Activated CD8-positive, alpha-beta T cell treated with anti-CD3 and anti-CD28 coated beads, Interleukin-2, amount 10 ng/mL, durations not matched to agents 7 days and 5 days (primary cell): ENCODE measurements at regions of chr2 and their contacts with region 1.

Region 1: DNA sequence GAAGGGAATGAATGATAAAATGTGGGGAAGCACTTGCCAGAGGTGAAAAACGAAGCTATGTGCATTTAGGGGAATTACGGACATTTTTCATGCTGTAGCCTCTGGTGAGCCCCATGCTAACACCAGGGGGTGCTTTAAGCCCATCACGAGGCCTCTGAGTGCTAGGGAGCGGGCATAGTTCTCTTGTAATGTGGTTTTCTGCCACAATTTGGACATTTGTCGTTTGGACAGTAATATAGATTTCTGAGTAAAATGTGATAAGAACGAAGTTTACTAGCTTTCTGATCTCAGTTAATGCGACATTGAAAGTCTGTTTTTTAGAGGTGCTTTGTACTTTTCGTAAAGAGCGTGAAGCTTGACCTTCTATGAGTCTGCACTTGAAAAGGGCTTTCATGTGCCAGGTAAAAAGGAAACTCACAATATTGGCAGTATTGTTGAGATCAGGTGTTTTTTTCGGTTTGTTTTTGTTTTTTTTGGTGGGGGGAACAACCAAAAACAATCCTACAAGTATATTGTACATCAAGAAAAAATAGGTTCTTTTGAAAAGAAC is 50.6 kb downstream of the TRAF3IP1 start:
- DNase-seq: peak; percentile 76
- ATAC-seq: peak; percentile 91
- H3K4me3 Mint-ChIP-seq: no peak overlapping the region
- H3K27ac Mint-ChIP-seq: no peak overlapping the region
- H3K4me1 Mint-ChIP-seq: peaks cover 8% of the 10 kb centered on the region
- H3K27me3 Mint-ChIP-seq: peaks cover 4% of the 10 kb centered on the region

Region 2: GRCh38 chr2:238256594-238257104 is 114.2 kb before region 1 on chr2:
- CTCF ChIA-PET with region 1: no interaction called
- POLR2A ChIA-PET with region 1: no interaction called
- DNase-seq: peak; percentile 79
- ATAC-seq: peak; percentile 93
- H3K4me3 Mint-ChIP-seq: no peak overlapping the region
- H3K27ac Mint-ChIP-seq: no peak overlapping the region
- H3K4me1 Mint-ChIP-seq: no peaks in the 10 kb centered on the region
- H3K27me3 Mint-ChIP-seq: no peaks in the 10 kb centered on the region

Region 3: GRCh38 chr2:238415036-238415764 is 44.3 kb after region 1 on chr2:
- CTCF ChIA-PET with region 1: interaction called, 10 read pairs
- POLR2A ChIA-PET with region 1: no interaction called
- DNase-seq: peak; percentile 45
- ATAC-seq: peak; percentile 65
- H3K4me3 Mint-ChIP-seq: no peak overlapping the region
- H3K27ac Mint-ChIP-seq: peak overlapping the region; percentile 20
- H3K4me1 Mint-ChIP-seq: peaks cover 11% of the 10 kb centered on the region
- H3K27me3 Mint-ChIP-seq: peaks cover 2% of the 10 kb centered on the region

Region 4: GRCh38 chr2:238431456-238431855 is 60.6 kb after region 1 on chr2:
- CTCF ChIA-PET with region 1: interaction called, 10 read pairs
- POLR2A ChIA-PET with region 1: no interaction called
- DNase-seq: no peak
- ATAC-seq: no peak
- H3K4me3 Mint-ChIP-seq: no peak overlapping the region
- H3K27ac Mint-ChIP-seq: no peak overlapping the region
- H3K4me1 Mint-ChIP-seq: peaks cover 42% of the 10 kb centered on the region
- H3K27me3 Mint-ChIP-seq: no peaks in the 10 kb centered on the region

Region 5: DNA sequence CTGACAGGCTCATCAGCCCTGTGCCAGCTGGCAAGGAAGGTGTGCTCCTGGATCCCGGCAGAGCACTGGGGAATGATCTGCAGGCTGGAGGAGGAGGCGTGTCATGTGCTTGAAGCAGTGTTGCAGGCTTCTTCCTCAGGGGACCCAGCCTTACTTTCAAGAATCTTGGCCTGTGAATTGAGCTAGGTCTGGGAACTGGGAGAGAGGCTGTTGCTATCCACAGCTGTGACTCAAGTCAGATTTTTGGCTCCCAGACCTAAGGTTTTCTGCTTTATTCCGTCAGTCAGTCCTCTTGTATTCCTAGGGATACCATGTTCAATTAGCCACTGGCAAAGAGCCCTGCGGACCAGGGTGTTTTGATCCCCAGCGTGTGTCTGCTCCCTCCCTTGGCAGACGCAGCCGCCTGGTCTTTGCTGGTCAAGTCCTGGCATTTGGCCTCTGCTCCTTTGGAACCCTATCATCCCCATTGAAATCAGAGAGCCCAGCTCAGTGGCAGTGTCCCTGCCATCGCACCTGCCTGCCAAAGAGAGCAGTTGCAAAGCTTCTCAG is 88.3 kb after region 1 on chr2:
- CTCF ChIA-PET with region 1: interaction called, 31 read pairs
- POLR2A ChIA-PET with region 1: no interaction called
- DNase-seq: peak; percentile 16
- ATAC-seq: no peak
- H3K4me3 Mint-ChIP-seq: no peak overlapping the region
- H3K27ac Mint-ChIP-seq: no peak overlapping the region
- H3K4me1 Mint-ChIP-seq: peaks cover 3% of the 10 kb centered on the region
- H3K27me3 Mint-ChIP-seq: peaks cover 7% of the 10 kb centered on the region

Region 6: GRCh38 chr2:238465487-238466242 is 94.8 kb after region 1 on chr2:
- CTCF ChIA-PET with region 1: interaction called, 31 read pairs
- POLR2A ChIA-PET with region 1: no interaction called
- DNase-seq: peak; percentile 17
- ATAC-seq: no peak
- H3K4me3 Mint-ChIP-seq: no peak overlapping the region
- H3K27ac Mint-ChIP-seq: no peak overlapping the region
- H3K4me1 Mint-ChIP-seq: peaks cover 3% of the 10 kb centered on the region
- H3K27me3 Mint-ChIP-seq: peaks cover 5% of the 10 kb centered on the region

Region 7: GRCh38 chr2:238513346-238513745 is 142.4 kb after region 1 on chr2:
- CTCF ChIA-PET with region 1: interaction called, 12 read pairs
- POLR2A ChIA-PET with region 1: no interaction called
- DNase-seq: peak; percentile 59
- ATAC-seq: no peak
- H3K4me3 Mint-ChIP-seq: no peak overlapping the region
- H3K27ac Mint-ChIP-seq: no peak overlapping the region
- H3K4me1 Mint-ChIP-seq: peaks cover 7% of the 10 kb centered on the region
- H3K27me3 Mint-ChIP-seq: peaks cover 11% of the 10 kb centered on the region